ENCODE measurements at regions of chr7 and their contacts with region 1.

Region 1: DNA sequence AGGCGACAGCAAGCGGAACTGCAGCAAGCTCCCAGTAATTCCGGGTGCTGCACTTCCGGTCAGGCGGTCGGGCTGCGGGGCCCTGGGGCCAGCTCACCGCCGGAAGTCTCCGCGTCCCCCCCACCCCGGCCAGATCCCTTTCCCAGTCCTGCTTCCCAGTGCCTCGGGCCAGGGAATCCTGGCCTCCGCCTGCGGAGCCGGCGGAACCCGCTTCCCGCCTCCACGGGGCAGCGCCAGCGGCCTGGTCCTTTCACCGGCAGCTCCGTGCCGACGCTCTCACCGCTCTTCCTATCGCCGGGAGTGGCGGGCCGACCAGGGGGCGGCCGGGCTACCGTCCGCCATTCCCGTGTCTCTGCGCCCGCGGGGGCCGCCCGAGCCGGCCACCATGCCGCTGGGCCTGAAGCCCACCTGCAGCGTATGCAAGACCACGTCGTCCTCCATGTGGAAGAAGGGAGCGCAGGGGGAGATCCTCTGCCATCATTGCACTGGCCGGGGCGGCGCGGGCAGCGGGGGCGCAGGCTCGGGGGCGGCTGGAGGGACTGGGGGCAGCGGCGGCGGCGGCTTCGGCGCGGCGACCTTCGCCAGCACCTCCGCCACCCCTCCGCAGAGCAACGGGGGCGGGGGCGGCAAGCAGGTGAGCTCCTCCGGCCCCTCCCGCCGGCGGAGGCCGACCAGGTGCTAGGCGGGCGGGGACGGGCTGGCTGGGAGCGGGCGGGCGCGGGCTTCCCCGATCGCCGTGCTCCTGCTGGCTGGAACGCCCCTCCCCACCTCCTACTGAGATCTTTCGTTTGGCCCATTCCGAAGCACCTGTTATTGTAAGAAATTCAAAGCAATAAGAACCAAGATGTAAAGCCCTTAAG is at the start of gene GATAD1:
- DNase-seq: peak; percentile 74
- ATAC-seq: peak; percentile 85
- H3K4me3 Mint-ChIP-seq: peak within 1 kb of the TSS; percentile 95
- H3K27ac Mint-ChIP-seq: peak within 1 kb of the TSS; percentile 97
- H3K4me1 Mint-ChIP-seq: peaks cover 8% of the 10 kb centered on the region
- H3K27me3 Mint-ChIP-seq: no peaks in the 10 kb centered on the region
- CTCF ChIP-seq: peak; percentile 61
- total RNA-seq, gene GATAD1: 30.6 and 36.2 TPM in 2 replicates

Region 2: GRCh38 chr7:91082852-91083495 is 1364.6 kb before region 1 on chr7:
- CTCF ChIA-PET with region 1: no interaction called
- POLR2A ChIA-PET with region 1: no interaction called
- intact Hi-C with region 1: loop called (anchors 2 kb)
- DNase-seq: no peak
- ATAC-seq: no peak
- H3K4me3 Mint-ChIP-seq: no peak overlapping the region
- H3K27ac Mint-ChIP-seq: peak overlapping the region; percentile 46
- H3K4me1 Mint-ChIP-seq: peaks cover 16% of the 10 kb centered on the region
- H3K27me3 Mint-ChIP-seq: no peaks in the 10 kb centered on the region
- CTCF ChIP-seq: no peak

Region 3: GRCh38 chr7:91918356-91918755 is 529.2 kb before region 1 on chr7:
- CTCF ChIA-PET with region 1: no interaction called
- POLR2A ChIA-PET with region 1: interaction called, 15 read pairs
- intact Hi-C with region 1: no loop called
- DNase-seq: no peak
- ATAC-seq: no peak
- H3K4me3 Mint-ChIP-seq: no peak overlapping the region
- H3K27ac Mint-ChIP-seq: no peak overlapping the region
- H3K4me1 Mint-ChIP-seq: no peaks in the 10 kb centered on the region
- H3K27me3 Mint-ChIP-seq: peaks cover 7% of the 10 kb centered on the region
- CTCF ChIP-seq: no peak

Region 4: DNA sequence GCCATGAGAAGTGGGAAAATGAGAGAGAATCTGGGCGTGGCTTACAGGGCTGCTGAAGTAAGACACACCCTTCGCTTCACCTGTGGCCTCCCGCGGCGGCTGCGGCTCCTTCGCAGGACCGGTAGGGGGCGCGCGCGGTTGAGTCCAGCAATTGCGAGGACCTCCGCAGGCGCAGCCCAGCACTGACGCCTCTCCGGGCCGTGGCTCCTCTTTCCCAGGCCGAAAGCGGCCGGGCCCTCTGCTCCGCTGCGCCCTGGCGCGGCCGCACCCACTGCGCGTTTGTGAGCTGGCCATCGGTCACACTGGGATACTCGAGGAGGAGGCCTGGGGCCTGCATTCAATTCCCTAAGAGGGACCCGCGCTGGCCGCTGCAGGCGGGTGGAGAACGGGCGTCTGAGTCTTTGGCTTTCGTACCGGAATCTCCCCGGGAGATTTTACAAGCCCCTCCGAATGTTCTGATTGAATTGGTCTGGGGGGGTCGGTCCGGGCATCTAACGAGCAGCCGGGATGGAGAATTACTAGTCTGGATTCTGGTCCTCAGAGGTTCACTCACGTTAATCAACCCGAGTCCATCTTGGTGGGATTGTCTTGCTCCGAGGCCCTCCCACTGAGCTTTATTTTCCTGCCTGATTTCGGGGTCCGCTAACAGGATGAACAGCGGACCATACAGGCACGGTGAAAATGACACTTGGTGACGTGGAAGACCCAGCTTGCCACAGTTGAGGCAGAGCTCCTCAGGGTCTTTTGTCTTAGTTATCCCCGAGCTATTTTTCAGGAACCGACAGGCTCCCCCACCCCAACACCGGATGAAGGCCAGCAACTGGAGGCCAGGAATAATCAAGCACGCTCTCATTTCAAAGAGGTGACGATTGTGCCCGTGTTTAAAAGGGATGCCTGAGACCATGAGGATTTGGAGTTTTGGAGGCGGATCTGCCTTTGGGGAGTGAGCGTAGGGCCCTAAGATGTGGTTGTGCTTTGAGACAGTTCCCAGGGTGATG is 268.3 kb before region 1 on chr7 and contains the start of gene LRRD1:
- CTCF ChIA-PET with region 1: interaction called, 5 read pairs
- POLR2A ChIA-PET with region 1: no interaction called
- intact Hi-C with region 1: loop called (anchors 1 kb)
- DNase-seq: peak; percentile 90
- ATAC-seq: peak; percentile 100
- H3K4me3 Mint-ChIP-seq: peak within 1 kb of the TSS; percentile 82
- H3K27ac Mint-ChIP-seq: no peak within 1 kb of the TSS
- H3K4me1 Mint-ChIP-seq: peaks cover 11% of the 10 kb centered on the region
- H3K27me3 Mint-ChIP-seq: no peaks in the 10 kb centered on the region
- CTCF ChIP-seq: no peak
- total RNA-seq, gene LRRD1: not detected in 2 replicates

Region 5: DNA sequence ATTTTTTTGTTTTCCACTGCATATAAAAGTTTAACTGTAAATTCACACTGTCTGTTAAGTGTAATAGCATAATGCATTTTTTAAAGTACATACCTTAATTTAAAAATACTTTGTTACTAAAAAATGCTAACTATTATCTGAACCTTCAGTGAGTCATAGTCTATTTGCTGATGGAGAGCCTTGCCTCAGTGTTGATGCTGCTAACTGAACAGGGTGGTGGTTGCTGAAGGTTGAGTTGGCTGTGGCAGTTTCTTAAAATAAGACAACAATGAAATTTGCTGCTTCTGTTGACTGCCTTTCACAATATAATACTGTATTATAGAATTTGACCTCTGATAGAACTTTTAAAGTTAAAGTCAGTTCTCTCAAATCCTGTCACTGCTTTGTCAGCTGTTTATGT is 72.6 kb before region 1 on chr7:
- CTCF ChIA-PET with region 1: no interaction called
- POLR2A ChIA-PET with region 1: no interaction called
- intact Hi-C with region 1: no loop called
- DNase-seq: no peak
- ATAC-seq: no peak
- H3K4me3 Mint-ChIP-seq: no peak overlapping the region
- H3K27ac Mint-ChIP-seq: no peak overlapping the region
- H3K4me1 Mint-ChIP-seq: no peaks in the 10 kb centered on the region
- H3K27me3 Mint-ChIP-seq: no peaks in the 10 kb centered on the region
- CTCF ChIP-seq: no peak

Region 6: GRCh38 chr7:92461027-92462003 is 13.7 kb after region 1 on chr7:
- CTCF ChIA-PET with region 1: interaction called, 15 read pairs
- POLR2A ChIA-PET with region 1: interaction called, 7 read pairs
- intact Hi-C with region 1: no loop called
- DNase-seq: no peak
- ATAC-seq: peak; percentile 50
- H3K4me3 Mint-ChIP-seq: no peak overlapping the region
- H3K27ac Mint-ChIP-seq: no peak overlapping the region
- H3K4me1 Mint-ChIP-seq: no peaks in the 10 kb centered on the region
- H3K27me3 Mint-ChIP-seq: no peaks in the 10 kb centered on the region
- CTCF ChIP-seq: no peak

Region 7: GRCh38 chr7:93055543-93056107 is 608.0 kb after region 1 on chr7:
- CTCF ChIA-PET with region 1: no interaction called
- POLR2A ChIA-PET with region 1: no interaction called
- intact Hi-C with region 1: loop called (anchors 1 kb)
- DNase-seq: no peak
- ATAC-seq: peak; percentile 79
- H3K4me3 Mint-ChIP-seq: no peak overlapping the region
- H3K27ac Mint-ChIP-seq: no peak overlapping the region
- H3K4me1 Mint-ChIP-seq: peaks cover 6% of the 10 kb centered on the region
- H3K27me3 Mint-ChIP-seq: no peaks in the 10 kb centered on the region
- CTCF ChIP-seq: peak; percentile 74